Right cardiac atrium (tissue), 5 donors: ENCODE measurements at regions of chr12 and their contacts with region 1.

Region 1: DNA sequence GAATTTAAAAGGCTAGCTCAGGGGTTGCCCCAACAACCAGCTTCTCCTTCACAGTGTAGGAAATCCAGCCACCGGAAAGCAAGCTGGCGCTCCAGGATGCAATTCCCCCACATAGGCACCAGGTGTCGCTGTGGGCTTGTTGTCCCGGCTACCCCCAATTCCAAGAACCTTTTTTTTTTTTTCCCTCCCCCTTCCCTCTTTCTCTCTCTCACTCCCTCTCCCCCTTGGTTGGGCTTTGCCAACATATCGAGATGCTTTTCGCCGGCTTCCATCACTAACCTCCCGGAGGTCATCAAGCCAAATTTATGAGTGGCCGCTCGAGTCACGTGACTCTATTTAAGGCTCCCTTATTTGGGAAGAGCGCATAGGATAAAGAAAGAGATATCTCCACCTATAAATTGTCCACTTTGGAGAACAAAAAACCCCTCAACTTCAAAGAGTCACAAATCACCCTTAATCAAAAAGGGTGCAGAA is at the start of gene HOXC5:
- DNase-seq: peak; percentile 53 to 77 (median 75)
- ATAC-seq: peak in 1 of 2 donors; percentile 20
- H3K4me3 ChIP-seq: peak within 1 kb of the TSS; percentile 57
- H3K27ac ChIP-seq: peak within 1 kb of the TSS; percentile 10
- H3K4me1 ChIP-seq: peaks cover 4% of the 10 kb centered on the region
- H3K27me3 ChIP-seq: no peaks in the 10 kb centered on the region
- total RNA-seq, gene HOXC5: not detected

Region 2: GRCh38 chr12:54191550-54192022 is 158.9 kb after region 1 on chr12:
- intact Hi-C with region 1: loop called in 1 of 4 experiments (anchors 10 kb)
- DNase-seq: peak; percentile 76 to 89 (median 87)
- ATAC-seq: peak; percentile 43 to 71
- H3K4me3 ChIP-seq: no peak overlapping the region
- H3K27ac ChIP-seq: no peak overlapping the region
- H3K4me1 ChIP-seq: no peaks in the 10 kb centered on the region
- H3K27me3 ChIP-seq: no peaks in the 10 kb centered on the region